Endothelial cell of umbilical vein (primary cell): ENCODE measurements at regions of chr12 and their contacts with region 1.

Region 1: GRCh38 chr12:70242695-70243509 is at the start of gene CNOT2:
- DNase-seq: peak; percentile 93
- H3K4me3 ChIP-seq: peak within 1 kb of the TSS; percentile 83 to 97 (median 84)
- H3K27ac ChIP-seq: peak within 1 kb of the TSS; percentile 86
- H3K4me1 ChIP-seq: peaks cover 47% of the 10 kb centered on the region
- H3K27me3 ChIP-seq: no peaks in the 10 kb centered on the region
- CTCF ChIP-seq: no peak
- POLR2A ChIP-seq: peak; percentile 35
- total RNA-seq, gene CNOT2: 79.1 and 79.7 TPM in 2 replicates

Region 2: GRCh38 chr12:70365648-70366518 is 123.0 kb after region 1 on chr12 and contains the start of gene KCNMB4:
- CTCF ChIA-PET with region 1: no interaction called
- POLR2A ChIA-PET with region 1: no interaction called
- dilution Hi-C with region 1: no loop called
- intact Hi-C with region 1: loop called (anchors 2 kb)
- DNase-seq: peak; percentile 51
- H3K4me3 ChIP-seq: peak within 1 kb of the TSS; percentile 60 to 67 (median 64)
- H3K27ac ChIP-seq: no peak within 1 kb of the TSS
- H3K4me1 ChIP-seq: peaks cover 14% of the 10 kb centered on the region
- H3K27me3 ChIP-seq: peaks cover 16 to 33% of the 10 kb centered on the region in 2 experiments
- CTCF ChIP-seq: no peak
- POLR2A ChIP-seq: no peak
- total RNA-seq, gene KCNMB4: 0.97 and 2.1 TPM in 2 replicates

Region 3: GRCh38 chr12:70507442-70507841 is 264.5 kb after region 1 on chr12:
- CTCF ChIA-PET with region 1: no interaction called
- POLR2A ChIA-PET with region 1: no interaction called
- dilution Hi-C with region 1: no loop called
- intact Hi-C with region 1: loop called (anchors 5 kb)
- DNase-seq: peak; percentile 94
- H3K4me3 ChIP-seq: no peak overlapping the region
- H3K27ac ChIP-seq: peak overlapping the region; percentile 83
- H3K4me1 ChIP-seq: peaks cover 20% of the 10 kb centered on the region
- H3K27me3 ChIP-seq: no peaks in the 10 kb centered on the region
- CTCF ChIP-seq: no peak
- POLR2A ChIP-seq: peak; percentile 55

Region 4: GRCh38 chr12:70549340-70550179 is 306.7 kb after region 1 on chr12:
- CTCF ChIA-PET with region 1: no interaction called
- POLR2A ChIA-PET with region 1: no interaction called
- dilution Hi-C with region 1: no loop called
- intact Hi-C with region 1: loop called (anchors 5 kb)
- DNase-seq: peak; percentile 93
- H3K4me3 ChIP-seq: no peak overlapping the region
- H3K27ac ChIP-seq: peak overlapping the region; percentile 76
- H3K4me1 ChIP-seq: peaks cover 38% of the 10 kb centered on the region
- H3K27me3 ChIP-seq: no peaks in the 10 kb centered on the region
- CTCF ChIP-seq: no peak
- POLR2A ChIP-seq: no peak

Region 5: GRCh38 chr12:70598467-70599193 is 355.7 kb after region 1 on chr12:
- CTCF ChIA-PET with region 1: no interaction called
- POLR2A ChIA-PET with region 1: no interaction called
- dilution Hi-C with region 1: no loop called
- intact Hi-C with region 1: loop called (anchors 5 kb)
- DNase-seq: peak; percentile 96
- H3K4me3 ChIP-seq: peak overlapping the region in 1 of 3 experiments; percentile 40
- H3K27ac ChIP-seq: peak overlapping the region; percentile 92
- H3K4me1 ChIP-seq: peaks cover 48% of the 10 kb centered on the region
- H3K27me3 ChIP-seq: no peaks in the 10 kb centered on the region
- CTCF ChIP-seq: no peak
- POLR2A ChIP-seq: peak; percentile 32